ENCODE measurements at regions of chr12 and their contacts with region 1.

Region 1: GRCh38 chr12:11581179-11581755 is 68.2 kb upstream of the ETV6 start:
- DNase-seq: peak; percentile 23 to 24
- ATAC-seq: peak in 1 of 2 donors; percentile 36
- H3K4me3 ChIP-seq: no peak overlapping the region
- H3K27ac ChIP-seq: no peak overlapping the region
- H3K4me1 ChIP-seq: no peaks in the 10 kb centered on the region
- H3K27me3 ChIP-seq: peaks cover 0 to 3% (median 0%) of the 10 kb centered on the region in 3 donors
- CTCF ChIP-seq: peak; percentile 62 to 78 (median 71)
- POLR2A ChIP-seq: no peak

Region 2: DNA sequence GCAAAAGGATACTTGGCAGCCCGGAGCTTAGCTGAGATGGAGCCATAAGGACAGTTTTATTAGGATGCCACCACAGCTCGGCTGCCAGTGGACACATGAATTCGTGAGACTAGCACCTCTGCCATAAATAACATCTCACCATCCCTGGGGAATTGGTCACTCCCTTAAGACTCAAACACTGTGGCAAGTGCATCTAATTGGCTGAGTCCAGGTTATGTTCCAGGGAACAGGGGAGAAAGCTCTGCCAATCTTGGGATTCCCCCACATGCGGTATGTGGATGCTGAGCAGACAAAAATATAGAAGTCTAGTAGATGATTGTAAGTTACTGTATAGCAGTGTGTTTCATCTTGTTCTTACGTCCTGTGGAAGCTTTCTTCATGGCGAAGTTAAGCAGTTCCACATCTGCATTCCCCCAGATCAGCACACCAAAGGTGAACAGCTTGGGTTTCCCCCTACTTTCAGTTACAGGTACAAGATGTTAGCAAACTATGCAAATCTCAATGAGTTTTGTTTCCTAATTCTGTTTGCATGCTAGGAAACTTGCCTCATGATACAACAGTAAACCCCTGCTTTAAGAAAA is 199.3 kb after region 1 on chr12:
- in situ Hi-C with region 1: no loop called
- intact Hi-C with region 1: no loop called
- DNase-seq: no peak
- ATAC-seq: no peak
- H3K4me3 ChIP-seq: no peak overlapping the region
- H3K27ac ChIP-seq: peak overlapping the region in 2 of 4 donors; percentile 58 to 60
- H3K4me1 ChIP-seq: peaks cover 46 to 48% of the 10 kb centered on the region in 2 donors
- H3K27me3 ChIP-seq: no peaks in the 10 kb centered on the region
- CTCF ChIP-seq: no peak
- POLR2A ChIP-seq: no peak

Region 3: DNA sequence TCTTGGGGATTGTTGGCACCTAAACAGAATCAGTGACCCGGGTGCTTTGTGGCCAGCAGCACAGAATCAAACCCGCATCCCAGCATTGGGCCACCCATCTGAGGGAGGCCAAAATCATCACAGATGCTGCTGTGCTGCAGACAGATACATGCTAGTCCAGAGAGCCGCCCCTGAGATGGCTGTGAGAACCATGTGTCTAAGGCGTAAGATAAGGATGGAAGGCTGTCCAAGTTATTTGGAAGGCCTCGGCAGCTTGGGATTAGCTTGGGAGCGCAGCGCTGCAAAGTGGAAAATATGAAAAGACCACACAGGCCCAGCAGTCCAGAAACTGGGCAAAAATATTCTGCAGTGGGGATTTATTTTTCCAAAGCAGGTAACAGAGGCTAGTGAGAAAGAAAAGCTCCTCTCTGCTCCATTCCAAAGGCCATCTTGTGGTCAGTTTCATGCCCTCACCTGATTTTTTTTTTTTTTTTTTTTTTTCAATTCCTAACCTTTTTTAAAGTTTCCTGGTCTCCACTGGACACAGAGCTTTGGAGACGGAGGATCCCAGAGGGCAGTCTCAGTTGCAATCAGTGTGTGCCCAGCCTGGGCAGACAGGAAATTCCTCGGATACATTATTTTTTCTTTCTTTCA is 310.6 kb after region 1 on chr12:
- in situ Hi-C with region 1: no loop called
- intact Hi-C with region 1: loop called (anchors 2 kb)
- DNase-seq: no peak
- ATAC-seq: no peak
- H3K4me3 ChIP-seq: no peak overlapping the region
- H3K27ac ChIP-seq: no peak overlapping the region
- H3K4me1 ChIP-seq: no peaks in the 10 kb centered on the region
- H3K27me3 ChIP-seq: no peaks in the 10 kb centered on the region
- CTCF ChIP-seq: peak in 3 of 5 experiments; percentile 23 to 49 (median 48)
- POLR2A ChIP-seq: no peak

Region 4: GRCh38 chr12:12024911-12025682 is 443.8 kb after region 1 on chr12:
- in situ Hi-C with region 1: loop called in 2 of 4 experiments (anchors 5 kb)
- intact Hi-C with region 1: no loop called
- DNase-seq: no peak
- ATAC-seq: no peak
- H3K4me3 ChIP-seq: no peak overlapping the region
- H3K27ac ChIP-seq: no peak overlapping the region
- H3K4me1 ChIP-seq: no peaks in the 10 kb centered on the region
- H3K27me3 ChIP-seq: no peaks in the 10 kb centered on the region
- CTCF ChIP-seq: no peak
- POLR2A ChIP-seq: no peak

Region 5: DNA sequence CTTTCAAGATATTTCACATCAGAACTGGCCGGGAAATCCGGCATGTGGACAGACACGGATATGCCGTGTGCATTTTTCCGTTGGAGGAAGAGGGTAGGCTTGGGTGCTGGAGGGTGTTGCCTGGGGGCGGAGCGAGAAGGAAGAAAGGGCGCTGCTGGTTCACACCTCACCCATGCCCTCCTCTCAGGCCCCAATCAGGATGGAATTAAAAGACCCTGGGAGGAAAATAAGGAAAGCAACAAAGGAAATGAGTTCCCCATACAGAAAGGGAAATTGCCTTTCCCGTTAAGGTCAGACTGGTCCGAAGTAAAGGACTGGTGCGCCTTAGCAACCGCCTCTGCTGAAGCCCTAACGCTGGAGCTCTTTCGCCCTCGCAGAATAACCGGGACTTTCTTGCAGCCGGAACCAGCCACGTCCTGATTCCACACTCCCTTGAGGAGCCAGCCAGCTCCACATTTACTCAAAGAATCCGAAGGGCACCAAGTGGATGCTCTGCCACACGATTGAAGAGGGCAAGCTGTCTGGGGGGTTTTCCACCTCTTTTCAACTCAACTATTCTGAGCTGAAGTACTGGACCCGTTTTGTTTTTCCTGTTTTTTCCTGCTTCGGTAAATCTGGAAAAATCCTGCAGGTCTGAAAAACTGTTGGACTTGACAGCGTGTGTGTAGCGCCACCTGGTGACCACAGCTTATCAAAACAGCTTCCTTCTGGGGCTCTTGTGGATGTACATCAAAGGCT is 451.8 kb after region 1 on chr12:
- in situ Hi-C with region 1: loop called (anchors 5 kb)
- intact Hi-C with region 1: loop called (anchors 1 kb)
- DNase-seq: peak; percentile 35 to 54
- ATAC-seq: peak; percentile 76 to 80
- H3K4me3 ChIP-seq: peak overlapping the region; percentile 35 to 64 (median 49)
- H3K27ac ChIP-seq: peak overlapping the region in 3 of 4 donors; percentile 13 to 49 (median 37)
- H3K4me1 ChIP-seq: no peaks in the 10 kb centered on the region
- H3K27me3 ChIP-seq: no peaks in the 10 kb centered on the region
- CTCF ChIP-seq: peak; percentile 81 to 89 (median 85)
- POLR2A ChIP-seq: no peak

Region 6: DNA sequence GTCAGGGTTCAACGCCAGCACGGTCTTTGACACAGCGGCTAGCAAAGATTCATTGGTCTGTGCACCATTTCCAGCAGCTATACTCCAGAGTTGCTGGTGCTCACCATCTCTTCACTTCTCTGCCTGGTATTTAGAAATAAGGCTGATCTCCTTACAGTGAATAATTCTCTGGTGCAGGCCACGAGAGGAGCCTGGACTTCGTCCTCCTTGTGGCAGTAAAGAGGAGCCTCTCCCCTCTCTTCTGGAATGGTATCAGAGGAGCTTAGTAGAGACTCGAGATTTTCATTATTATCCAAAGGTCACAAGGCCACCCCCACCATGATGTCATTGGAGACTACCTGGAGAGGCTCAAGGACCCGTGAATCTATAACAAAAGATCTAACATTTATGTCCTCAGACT is 458.6 kb after region 1 on chr12:
- in situ Hi-C with region 1: loop called in 2 of 4 experiments (anchors 5 kb)
- intact Hi-C with region 1: no loop called
- DNase-seq: no peak
- ATAC-seq: no peak
- H3K4me3 ChIP-seq: no peak overlapping the region
- H3K27ac ChIP-seq: no peak overlapping the region
- H3K4me1 ChIP-seq: no peaks in the 10 kb centered on the region
- H3K27me3 ChIP-seq: no peaks in the 10 kb centered on the region
- CTCF ChIP-seq: no peak
- POLR2A ChIP-seq: no peak

Region 7: GRCh38 chr12:12334367-12335040 is 753.2 kb after region 1 on chr12:
- in situ Hi-C with region 1: loop called in 2 of 4 experiments (anchors 25 kb)
- intact Hi-C with region 1: no loop called
- DNase-seq: peak in 1 of 2 donors; percentile 20
- ATAC-seq: peak; percentile 42 to 60
- H3K4me3 ChIP-seq: no peak overlapping the region
- H3K27ac ChIP-seq: no peak overlapping the region
- H3K4me1 ChIP-seq: peaks cover 0 to 6% of the 10 kb centered on the region in 2 donors
- H3K27me3 ChIP-seq: no peaks in the 10 kb centered on the region
- CTCF ChIP-seq: peak; percentile 63 to 90 (median 72)
- POLR2A ChIP-seq: no peak